B cell (primary cell): ENCODE measurements at regions of chr11 and their contacts with region 1.

Region 1: GRCh38 chr11:111601979-111602864 is at the start of gene SIK2:
- DNase-seq: peak; percentile 96
- ATAC-seq: peak; percentile 93
- H3K4me3 ChIP-seq: peak within 1 kb of the TSS; percentile 75 to 96 (median 88)
- H3K4me3 Mint-ChIP-seq: peak within 1 kb of the TSS; percentile 98
- H3K27ac ChIP-seq: peak within 1 kb of the TSS; percentile 84 to 92
- H3K27ac Mint-ChIP-seq: peak within 1 kb of the TSS; percentile 94
- H3K4me1 ChIP-seq: peaks cover 14 to 21% of the 10 kb centered on the region in 2 donors
- H3K4me1 Mint-ChIP-seq: peaks cover 18% of the 10 kb centered on the region
- H3K27me3 ChIP-seq: no peaks in the 10 kb centered on the region
- H3K27me3 Mint-ChIP-seq: no peaks in the 10 kb centered on the region
- CTCF ChIP-seq: peak; percentile 77
- total RNA-seq, gene SIK2: 20.4 and 21.8 TPM in 2 replicates

Region 2: GRCh38 chr11:110296226-110297075 is 1305.8 kb before region 1 on chr11 and contains the start of gene RDX:
- CTCF ChIA-PET with region 1: no interaction called
- POLR2A ChIA-PET with region 1: no interaction called
- intact Hi-C with region 1: loop called (anchors 5 kb)
- DNase-seq: peak; percentile 83
- ATAC-seq: peak; percentile 84
- H3K4me3 ChIP-seq: peak within 1 kb of the TSS; percentile 50 to 93 (median 86)
- H3K4me3 Mint-ChIP-seq: peak within 1 kb of the TSS; percentile 94
- H3K27ac ChIP-seq: peak within 1 kb of the TSS; percentile 18 to 70
- H3K27ac Mint-ChIP-seq: peak within 1 kb of the TSS; percentile 80
- H3K4me1 ChIP-seq: peaks cover 8 to 12% of the 10 kb centered on the region in 2 donors
- H3K4me1 Mint-ChIP-seq: peaks cover 24% of the 10 kb centered on the region
- H3K27me3 ChIP-seq: peaks cover 0 to 3% (median 0%) of the 10 kb centered on the region in 4 experiments
- H3K27me3 Mint-ChIP-seq: no peaks in the 10 kb centered on the region
- CTCF ChIP-seq: no peak
- total RNA-seq, gene RDX: 34.8 and 39.2 TPM in 2 replicates

Region 3: DNA sequence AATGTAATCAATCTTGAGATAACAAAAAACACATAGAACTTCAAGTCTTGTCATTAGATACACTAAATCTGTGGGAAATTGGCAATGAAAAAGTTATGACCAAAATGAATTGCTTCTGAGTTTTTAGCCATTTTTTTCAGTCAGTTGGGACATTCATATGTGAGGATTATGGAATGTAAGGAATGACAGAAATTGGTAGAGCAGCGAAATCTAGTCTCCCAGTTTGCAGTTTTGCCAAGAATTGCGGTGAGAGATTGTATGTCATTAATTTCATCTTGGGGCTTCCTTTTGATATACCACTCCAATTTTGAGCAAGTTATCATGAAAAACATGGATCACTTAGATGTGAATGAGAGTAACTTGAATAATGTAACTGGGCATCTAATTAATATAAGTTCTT is 50.0 kb after region 1 on chr11:
- CTCF ChIA-PET with region 1: no interaction called
- POLR2A ChIA-PET with region 1: no interaction called
- intact Hi-C with region 1: no loop called
- DNase-seq: no peak
- ATAC-seq: no peak
- H3K4me3 ChIP-seq: no peak overlapping the region
- H3K4me3 Mint-ChIP-seq: no peak overlapping the region
- H3K27ac ChIP-seq: no peak overlapping the region
- H3K27ac Mint-ChIP-seq: no peak overlapping the region
- H3K4me1 ChIP-seq: no peaks in the 10 kb centered on the region
- H3K4me1 Mint-ChIP-seq: peaks cover 1% of the 10 kb centered on the region
- H3K27me3 ChIP-seq: no peaks in the 10 kb centered on the region
- H3K27me3 Mint-ChIP-seq: no peaks in the 10 kb centered on the region
- CTCF ChIP-seq: no peak

Region 4: DNA sequence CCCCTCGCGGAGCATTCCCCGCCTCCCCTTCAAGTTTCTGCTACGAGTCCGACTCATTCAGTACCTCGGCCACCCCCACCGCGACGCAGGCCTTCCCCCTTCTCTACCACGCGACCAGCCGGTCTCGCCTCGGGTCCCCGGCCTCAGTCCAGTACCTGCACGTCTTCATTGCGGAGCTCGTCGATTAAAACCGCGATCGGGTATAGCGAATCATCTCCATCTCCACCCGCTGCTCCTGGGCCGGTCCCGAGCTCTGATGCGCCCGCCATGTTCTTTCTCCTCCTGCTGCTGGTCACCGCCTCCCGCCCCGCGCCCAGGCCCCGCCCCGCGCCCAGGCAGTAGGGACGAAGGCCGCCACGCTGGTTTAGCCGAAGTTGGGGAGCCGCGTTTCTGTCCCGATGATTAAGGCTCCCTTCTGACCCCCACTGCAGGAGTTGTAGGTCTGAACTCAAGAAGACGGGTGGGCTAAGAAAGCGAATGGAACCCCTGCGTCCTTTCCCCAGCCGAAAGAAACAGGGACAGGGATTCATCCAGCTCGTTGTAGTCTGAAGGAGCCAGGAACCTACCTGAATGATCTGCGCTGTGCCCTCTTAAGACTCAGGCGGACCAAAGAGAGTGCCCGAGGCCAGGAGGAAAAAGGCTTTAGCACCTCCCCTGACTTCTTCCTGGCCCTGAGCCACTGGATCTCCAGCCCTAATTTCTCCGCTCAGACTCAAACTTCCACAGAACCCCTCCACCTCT is 164.0 kb after region 1 on chr11 and contains the start of gene PPP2R1B:
- CTCF ChIA-PET with region 1: interaction called, 21 read pairs
- POLR2A ChIA-PET with region 1: interaction called, 5 read pairs
- intact Hi-C with region 1: loop called (anchors 1 kb)
- DNase-seq: peak; percentile 88
- ATAC-seq: peak; percentile 97
- H3K4me3 ChIP-seq: peak within 1 kb of the TSS; percentile 74 to 97 (median 90)
- H3K4me3 Mint-ChIP-seq: peak within 1 kb of the TSS; percentile 100
- H3K27ac ChIP-seq: peak within 1 kb of the TSS; percentile 53 to 77
- H3K27ac Mint-ChIP-seq: peak within 1 kb of the TSS; percentile 97
- H3K4me1 ChIP-seq: peaks cover 9 to 16% of the 10 kb centered on the region in 2 donors
- H3K4me1 Mint-ChIP-seq: peaks cover 37% of the 10 kb centered on the region
- H3K27me3 ChIP-seq: no peaks in the 10 kb centered on the region
- H3K27me3 Mint-ChIP-seq: no peaks in the 10 kb centered on the region
- CTCF ChIP-seq: no peak
- total RNA-seq, gene PPP2R1B: 35.6 and 37.0 TPM in 2 replicates

Region 5: GRCh38 chr11:111841370-111842053 is 239.3 kb after region 1 on chr11:
- CTCF ChIA-PET with region 1: interaction called, 6 read pairs
- POLR2A ChIA-PET with region 1: no interaction called
- intact Hi-C with region 1: loop called (anchors 1 kb)
- DNase-seq: peak; percentile 86
- ATAC-seq: peak; percentile 86
- H3K4me3 ChIP-seq: no peak overlapping the region
- H3K4me3 Mint-ChIP-seq: no peak overlapping the region
- H3K27ac ChIP-seq: no peak overlapping the region
- H3K27ac Mint-ChIP-seq: no peak overlapping the region
- H3K4me1 ChIP-seq: peaks cover 3% of the 10 kb centered on the region in 2 donors
- H3K4me1 Mint-ChIP-seq: peaks cover 6% of the 10 kb centered on the region
- H3K27me3 ChIP-seq: no peaks in the 10 kb centered on the region
- H3K27me3 Mint-ChIP-seq: no peaks in the 10 kb centered on the region
- CTCF ChIP-seq: peak; percentile 92

Region 6: DNA sequence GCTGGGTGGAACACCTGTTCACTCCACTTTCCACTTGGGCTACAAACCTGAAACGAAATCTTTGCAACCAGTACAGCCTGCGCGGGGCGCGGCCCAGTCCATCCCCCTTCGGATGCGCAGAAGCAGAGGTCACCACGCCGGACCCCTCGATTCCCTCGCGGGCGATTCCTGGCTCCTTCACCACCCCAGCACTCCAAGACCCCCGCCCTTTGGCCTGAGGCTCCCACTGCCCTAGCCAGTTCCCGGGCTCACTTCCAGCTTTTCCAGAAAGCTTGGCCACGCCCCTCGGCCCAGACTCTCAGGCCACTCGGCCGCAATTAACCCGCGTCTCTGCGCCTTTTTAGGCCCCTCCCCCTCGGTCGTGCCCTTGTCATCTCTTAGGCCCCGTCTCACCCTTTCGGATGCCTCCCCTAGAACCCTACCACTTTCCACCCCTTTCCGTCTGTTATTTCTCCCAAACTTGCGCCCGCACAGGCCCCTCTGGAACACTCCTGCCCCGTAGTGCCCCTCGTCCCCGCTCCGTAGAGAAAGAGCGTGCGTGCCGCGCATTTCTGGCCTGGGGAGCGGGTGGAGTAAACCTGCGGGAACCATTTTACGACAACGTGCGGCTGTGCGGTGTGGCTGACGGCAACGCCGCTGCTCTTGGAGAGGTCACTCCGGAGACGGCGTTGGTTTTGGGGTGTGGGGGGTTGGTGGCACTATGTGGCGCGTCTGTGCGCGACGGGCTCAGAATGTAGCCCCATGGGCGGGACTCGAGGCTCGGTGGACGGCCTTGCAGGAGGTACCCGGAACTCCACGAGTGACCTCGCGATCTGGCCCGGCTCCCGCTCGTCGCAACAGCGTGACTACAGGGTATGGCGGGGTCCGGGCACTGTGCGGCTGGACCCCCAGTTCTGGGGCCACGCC is 422.8 kb after region 1 on chr11 and contains the start of gene DLAT:
- CTCF ChIA-PET with region 1: no interaction called
- POLR2A ChIA-PET with region 1: no interaction called
- intact Hi-C with region 1: loop called (anchors 2 kb)
- DNase-seq: peak; percentile 90
- ATAC-seq: peak; percentile 83
- H3K4me3 ChIP-seq: peak within 1 kb of the TSS; percentile 76 to 100 (median 98)
- H3K4me3 Mint-ChIP-seq: peak within 1 kb of the TSS; percentile 100
- H3K27ac ChIP-seq: peak within 1 kb of the TSS; percentile 75 to 83
- H3K27ac Mint-ChIP-seq: peak within 1 kb of the TSS; percentile 98
- H3K4me1 ChIP-seq: peaks cover 18 to 20% of the 10 kb centered on the region in 2 donors
- H3K4me1 Mint-ChIP-seq: peaks cover 29% of the 10 kb centered on the region
- H3K27me3 ChIP-seq: no peaks in the 10 kb centered on the region
- H3K27me3 Mint-ChIP-seq: no peaks in the 10 kb centered on the region
- CTCF ChIP-seq: no peak
- total RNA-seq, gene DLAT: 19.8 and 21.1 TPM in 2 replicates